ENCODE measurements at regions of chr17 and their contacts with region 1.

Region 1: DNA sequence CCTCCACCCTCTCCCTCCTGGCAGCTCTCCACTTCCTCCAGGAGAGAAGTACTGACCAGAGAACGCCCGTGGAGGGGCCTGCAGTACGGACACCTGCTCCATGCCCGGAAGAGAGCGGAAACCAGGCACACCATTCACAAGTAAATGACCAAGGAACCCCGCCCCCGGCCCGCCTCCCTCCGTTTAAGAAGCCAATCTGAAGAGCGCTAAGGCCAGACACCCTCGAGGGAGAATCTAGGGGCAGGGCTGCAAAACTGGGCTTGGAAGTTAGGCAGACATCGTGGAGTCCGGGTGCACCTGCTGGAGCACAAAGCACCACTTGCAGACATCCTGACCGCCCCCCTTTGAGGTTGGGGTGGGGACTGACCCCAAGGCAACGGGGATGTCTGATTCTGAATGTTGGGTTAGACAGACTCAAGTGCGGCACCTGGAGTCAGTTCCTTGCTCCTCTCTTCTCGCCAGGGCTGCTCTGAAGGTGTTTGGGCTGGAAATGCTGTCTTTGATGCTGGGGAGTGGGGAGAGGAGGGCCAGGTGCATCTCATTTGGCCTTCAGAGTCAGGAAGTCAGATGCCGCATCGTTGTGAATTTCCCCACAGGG is 964 bp upstream of the FAAP100 start:
- DNase-seq: peak; percentile 94
- H3K4me3 ChIP-seq: peak overlapping the region; percentile 88
- H3K27ac ChIP-seq: peak overlapping the region; percentile 80
- H3K4me1 ChIP-seq: peaks cover 30% of the 10 kb centered on the region
- CTCF ChIP-seq: peak; percentile 59

Region 2: GRCh38 chr17:81419328-81419885 is 133.7 kb before region 1 on chr17:
- CTCF ChIA-PET with region 1: no interaction called
- POLR2A ChIA-PET with region 1: no interaction called
- intact Hi-C with region 1: no loop called
- DNase-seq: no peak
- H3K4me3 ChIP-seq: no peak overlapping the region
- H3K27ac ChIP-seq: no peak overlapping the region
- H3K4me1 ChIP-seq: no peaks in the 10 kb centered on the region
- CTCF ChIP-seq: no peak

Region 3: DNA sequence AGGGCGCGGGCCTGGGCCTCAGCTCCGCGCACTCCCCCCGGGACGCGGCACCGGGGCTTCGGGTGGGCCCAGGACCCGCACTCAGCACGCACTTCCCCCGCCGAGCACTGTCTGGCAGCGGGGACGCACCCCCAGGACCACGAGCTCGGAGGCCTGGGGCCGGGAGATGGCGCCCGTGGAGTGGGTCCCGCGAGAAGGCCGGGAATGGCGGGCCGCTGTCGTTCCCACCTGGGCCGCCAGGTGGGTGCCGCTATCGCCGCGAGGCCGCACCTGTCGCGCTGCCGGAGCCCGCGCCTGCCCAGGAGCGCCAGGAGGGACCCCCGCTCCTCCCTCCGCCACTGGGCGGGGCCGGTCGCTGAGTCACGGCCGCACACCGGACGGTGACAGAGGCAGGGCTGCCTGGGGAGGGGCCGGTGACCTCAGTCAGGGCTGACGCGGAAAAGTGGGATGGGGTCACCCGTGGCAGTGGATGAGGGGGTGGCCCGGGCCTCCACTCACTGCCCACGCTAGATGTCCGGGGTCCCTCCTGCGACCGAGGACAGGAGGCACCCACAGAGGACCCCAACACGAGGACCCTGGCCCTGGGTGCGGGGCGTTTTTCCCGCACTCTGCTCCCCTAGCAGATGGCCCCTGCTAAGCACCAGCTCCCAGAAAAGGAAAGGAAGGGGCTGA is 33.7 kb before region 1 on chr17:
- CTCF ChIA-PET with region 1: no interaction called
- POLR2A ChIA-PET with region 1: interaction called, 15 read pairs
- intact Hi-C with region 1: loop called (anchors 1 kb)
- DNase-seq: peak; percentile 78
- H3K4me3 ChIP-seq: peak overlapping the region; percentile 90
- H3K27ac ChIP-seq: peak overlapping the region; percentile 89
- H3K4me1 ChIP-seq: peaks cover 55% of the 10 kb centered on the region
- CTCF ChIP-seq: peak; percentile 77

Region 4: GRCh38 chr17:81579821-81580321 is 26.8 kb after region 1 on chr17:
- CTCF ChIA-PET with region 1: no interaction called
- POLR2A ChIA-PET with region 1: no interaction called
- intact Hi-C with region 1: no loop called
- DNase-seq: no peak
- H3K4me3 ChIP-seq: no peak overlapping the region
- H3K27ac ChIP-seq: no peak overlapping the region
- H3K4me1 ChIP-seq: no peaks in the 10 kb centered on the region
- CTCF ChIP-seq: no peak

Region 5: DNA sequence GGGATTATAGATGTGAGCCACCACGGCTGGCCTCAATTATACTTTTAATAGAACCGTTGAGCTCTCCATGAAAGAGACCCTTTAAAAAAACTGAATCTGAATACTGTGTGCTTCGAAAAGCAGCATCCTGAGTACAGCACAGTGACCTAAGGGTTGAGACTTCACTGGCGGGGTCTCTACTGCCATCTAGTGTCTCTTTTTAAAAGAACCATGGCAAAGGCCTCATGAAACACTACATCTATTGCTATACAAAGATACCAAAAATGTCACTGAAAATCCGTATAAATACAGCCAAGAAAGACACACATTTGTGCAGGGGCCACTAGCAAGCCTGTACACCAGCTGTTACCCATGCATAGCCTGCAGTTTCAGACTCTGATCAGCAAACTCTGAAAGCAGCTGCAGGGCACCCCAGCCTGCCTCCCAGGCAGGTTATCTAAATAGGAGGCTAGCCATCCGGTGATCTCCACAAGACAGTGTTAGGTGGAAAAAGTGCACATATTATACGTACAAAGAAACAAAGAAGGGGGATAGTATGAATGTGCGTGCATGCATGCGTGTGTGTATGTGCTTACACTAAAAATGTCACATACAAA is 48.5 kb after region 1 on chr17:
- CTCF ChIA-PET with region 1: interaction called, 3 read pairs
- POLR2A ChIA-PET with region 1: interaction called, 4 read pairs
- intact Hi-C with region 1: loop called (anchors 2 kb)
- DNase-seq: peak; percentile 82
- H3K4me3 ChIP-seq: no peak overlapping the region
- H3K27ac ChIP-seq: peak overlapping the region; percentile 12
- H3K4me1 ChIP-seq: peaks cover 28% of the 10 kb centered on the region
- CTCF ChIP-seq: peak; percentile 100

Region 6: GRCh38 chr17:81636505-81637288 is 83.6 kb after region 1 on chr17 and contains the starts of genes NPLOC4 and TSPAN10:
- CTCF ChIA-PET with region 1: no interaction called
- POLR2A ChIA-PET with region 1: no interaction called
- intact Hi-C with region 1: loop called (anchors 5 kb)
- DNase-seq: peak; percentile 93
- H3K4me3 ChIP-seq: peak within 1 kb of the TSS; percentile 84
- H3K27ac ChIP-seq: peak within 1 kb of the TSS; percentile 14
- H3K4me1 ChIP-seq: peaks cover 15% of the 10 kb centered on the region
- CTCF ChIP-seq: no peak
- total RNA-seq, gene NPLOC4: 59.4 and 69.6 TPM in 2 replicates
- total RNA-seq, gene TSPAN10: 0.95 and 1.3 TPM in 2 replicates